Panc1 (cell line): ENCODE measurements at regions of chr4 and their contacts with region 1.

Region 1: GRCh38 chr4:187767687-187768086 is 227.9 kb upstream of the ZFP42 start:
- DNase-seq: no peak
- ATAC-seq: no peak
- H3K4me3 ChIP-seq: no peak overlapping the region
- H3K27ac ChIP-seq: no peak overlapping the region
- H3K4me1 ChIP-seq: no peaks in the 10 kb centered on the region
- H3K27me3 ChIP-seq: no peaks in the 10 kb centered on the region
- CTCF ChIP-seq: no peak

Region 2: GRCh38 chr4:187618701-187619281 is 148.9 kb before region 1 on chr4:
- CTCF ChIA-PET with region 1: no interaction called
- POLR2A ChIA-PET with region 1: no interaction called
- in situ Hi-C with region 1: no loop called
- intact Hi-C with region 1: no loop called
- DNase-seq: no peak
- ATAC-seq: no peak
- H3K4me3 ChIP-seq: no peak overlapping the region
- H3K27ac ChIP-seq: no peak overlapping the region
- H3K4me1 ChIP-seq: no peaks in the 10 kb centered on the region
- H3K27me3 ChIP-seq: no peaks in the 10 kb centered on the region
- CTCF ChIP-seq: no peak

Region 3: GRCh38 chr4:187921946-187922623 is 154.4 kb after region 1 on chr4:
- CTCF ChIA-PET with region 1: no interaction called
- POLR2A ChIA-PET with region 1: no interaction called
- in situ Hi-C with region 1: no loop called
- intact Hi-C with region 1: no loop called
- DNase-seq: no peak
- ATAC-seq: no peak
- H3K4me3 ChIP-seq: no peak overlapping the region
- H3K27ac ChIP-seq: no peak overlapping the region
- H3K4me1 ChIP-seq: no peaks in the 10 kb centered on the region
- H3K27me3 ChIP-seq: no peaks in the 10 kb centered on the region
- CTCF ChIP-seq: no peak

Region 4: DNA sequence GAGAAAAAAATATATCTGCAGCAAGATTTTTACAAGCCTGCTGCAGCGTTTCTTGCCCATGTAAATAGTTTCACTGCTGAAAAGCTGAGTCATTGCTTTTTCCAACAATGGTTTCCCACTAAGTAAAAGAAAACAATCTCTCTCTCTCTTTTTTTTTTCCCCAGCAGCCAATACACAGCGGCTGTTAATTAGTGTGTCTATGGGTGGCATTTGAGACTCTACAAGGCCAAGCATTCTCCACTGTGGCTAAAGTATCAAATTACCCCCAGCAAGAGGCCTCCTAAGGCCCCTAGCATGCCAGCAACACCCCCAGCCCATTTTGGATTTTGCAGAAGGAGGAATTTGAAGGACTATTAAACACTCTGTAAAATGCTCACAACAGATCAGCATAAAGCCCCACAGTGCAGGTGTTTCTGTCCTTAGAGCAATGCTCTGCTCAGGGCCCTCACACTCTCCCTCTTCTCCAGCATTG is 1209.0 kb after region 1 on chr4:
- CTCF ChIA-PET with region 1: no interaction called
- POLR2A ChIA-PET with region 1: interaction called, 12 read pairs
- in situ Hi-C with region 1: no loop called
- intact Hi-C with region 1: no loop called
- DNase-seq: no peak
- ATAC-seq: peak; percentile 58; the same call in 1 of the 2 replicates
- H3K4me3 ChIP-seq: no peak overlapping the region
- H3K27ac ChIP-seq: no peak overlapping the region; the same call in 1 of the 2 replicates
- H3K4me1 ChIP-seq: peaks cover 6% of the 10 kb centered on the region; the same call in 1 of the 2 replicates
- H3K27me3 ChIP-seq: no peaks in the 10 kb centered on the region
- CTCF ChIP-seq: no peak